Transverse colon (tissue), 4 donors: ENCODE measurements at regions of chr10 and their contacts with region 1.

Region 1: GRCh38 chr10:27742195-27743011 is 3.2 kb downstream of the MKX start:
- DNase-seq: peak; percentile 81
- H3K4me3 ChIP-seq: peak overlapping the region; percentile 39 to 95 (median 60)
- H3K27ac ChIP-seq: peak overlapping the region; percentile 83 to 87 (median 85)
- H3K4me1 ChIP-seq: peaks cover 0 to 52% (median 43%) of the 10 kb centered on the region in 4 donors
- H3K27me3 ChIP-seq: peaks cover 85% of the 10 kb centered on the region
- CTCF ChIP-seq: peak; percentile 70 to 84 (median 77)
- EP300 ChIP-seq: no peak
- POLR2A ChIP-seq: no peak

Region 2: GRCh38 chr10:28179006-28179742 is 436.8 kb after region 1 on chr10:
- in situ Hi-C with region 1: loop called in 3 of 4 experiments (anchors 25 kb)
- intact Hi-C with region 1: loop called (anchors 10 kb)
- DNase-seq: no peak
- H3K4me3 ChIP-seq: no peak overlapping the region
- H3K27ac ChIP-seq: peak overlapping the region in 2 of 4 donors; percentile 13 to 44
- H3K4me1 ChIP-seq: peaks cover 0 to 16% (median 9%) of the 10 kb centered on the region in 4 donors
- H3K27me3 ChIP-seq: no peaks in the 10 kb centered on the region
- CTCF ChIP-seq: peak; percentile 64 to 81 (median 73)
- EP300 ChIP-seq: no peak
- POLR2A ChIP-seq: no peak